ENCODE measurements at regions of chr2 and their contacts with region 1.

Region 1: DNA sequence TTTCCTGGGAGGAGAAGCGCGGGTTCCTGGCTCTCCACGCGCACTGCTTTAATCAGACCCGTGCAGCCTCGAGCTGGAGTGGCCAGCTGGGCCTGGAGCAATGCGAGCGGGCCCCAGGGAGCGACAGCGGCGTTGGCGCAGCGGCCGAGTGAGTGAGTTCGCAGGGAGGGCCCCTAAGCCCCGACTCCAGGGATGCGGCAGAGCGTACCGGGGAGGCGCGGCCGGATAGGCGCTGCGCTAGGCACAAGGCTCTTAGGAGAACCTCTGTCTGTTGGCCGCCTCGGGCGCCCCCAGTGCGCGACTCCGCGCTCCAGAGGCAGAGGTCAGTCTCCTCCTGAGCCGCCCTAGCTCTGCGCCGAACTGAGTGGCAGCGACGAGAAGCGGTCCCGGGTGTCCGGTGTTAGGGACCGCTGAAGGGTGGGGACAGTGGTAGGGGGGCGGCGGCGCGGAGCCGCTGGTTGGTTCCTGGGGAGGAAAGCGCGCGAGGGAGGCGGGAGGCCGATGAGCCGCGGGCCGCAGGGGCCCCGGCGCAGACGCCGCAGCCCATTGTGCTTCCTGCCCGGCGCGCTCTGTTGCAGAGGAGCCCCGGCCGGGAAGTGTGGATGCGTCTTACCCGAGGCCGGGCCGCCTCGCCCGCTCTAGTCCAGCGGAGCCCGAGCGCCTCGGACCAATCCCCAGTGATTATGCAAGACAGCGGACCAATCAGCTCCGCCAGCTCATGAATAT is 410 bp upstream of the DLX1 start:
- DNase-seq: peak; percentile 78
- H3K4me3 Mint-ChIP-seq: peak overlapping the region; percentile 75
- H3K27ac Mint-ChIP-seq: no peak overlapping the region
- H3K4me1 Mint-ChIP-seq: peaks cover 57% of the 10 kb centered on the region
- H3K27me3 Mint-ChIP-seq: peaks cover 93% of the 10 kb centered on the region

Region 2: GRCh38 chr2:170715062-170715931 is 1369.6 kb before region 1 on chr2 and contains the start of gene SP5:
- CTCF ChIA-PET with region 1: no interaction called
- POLR2A ChIA-PET with region 1: no interaction called
- intact Hi-C with region 1: loop called (anchors 10 kb)
- DNase-seq: peak; percentile 40
- H3K4me3 Mint-ChIP-seq: peak within 1 kb of the TSS; percentile 69
- H3K27ac Mint-ChIP-seq: no peak within 1 kb of the TSS
- H3K4me1 Mint-ChIP-seq: peaks cover 37% of the 10 kb centered on the region
- H3K27me3 Mint-ChIP-seq: peaks cover 68% of the 10 kb centered on the region
- total RNA-seq, gene SP5: not detected

Region 3: GRCh38 chr2:170822290-170823087 is 1262.4 kb before region 1 on chr2:
- CTCF ChIA-PET with region 1: no interaction called
- POLR2A ChIA-PET with region 1: no interaction called
- intact Hi-C with region 1: loop called (anchors 5 kb)
- DNase-seq: peak; percentile 62
- H3K4me3 Mint-ChIP-seq: peak overlapping the region; percentile 4
- H3K27ac Mint-ChIP-seq: no peak overlapping the region
- H3K4me1 Mint-ChIP-seq: peaks cover 42% of the 10 kb centered on the region
- H3K27me3 Mint-ChIP-seq: peaks cover 69% of the 10 kb centered on the region

Region 4: DNA sequence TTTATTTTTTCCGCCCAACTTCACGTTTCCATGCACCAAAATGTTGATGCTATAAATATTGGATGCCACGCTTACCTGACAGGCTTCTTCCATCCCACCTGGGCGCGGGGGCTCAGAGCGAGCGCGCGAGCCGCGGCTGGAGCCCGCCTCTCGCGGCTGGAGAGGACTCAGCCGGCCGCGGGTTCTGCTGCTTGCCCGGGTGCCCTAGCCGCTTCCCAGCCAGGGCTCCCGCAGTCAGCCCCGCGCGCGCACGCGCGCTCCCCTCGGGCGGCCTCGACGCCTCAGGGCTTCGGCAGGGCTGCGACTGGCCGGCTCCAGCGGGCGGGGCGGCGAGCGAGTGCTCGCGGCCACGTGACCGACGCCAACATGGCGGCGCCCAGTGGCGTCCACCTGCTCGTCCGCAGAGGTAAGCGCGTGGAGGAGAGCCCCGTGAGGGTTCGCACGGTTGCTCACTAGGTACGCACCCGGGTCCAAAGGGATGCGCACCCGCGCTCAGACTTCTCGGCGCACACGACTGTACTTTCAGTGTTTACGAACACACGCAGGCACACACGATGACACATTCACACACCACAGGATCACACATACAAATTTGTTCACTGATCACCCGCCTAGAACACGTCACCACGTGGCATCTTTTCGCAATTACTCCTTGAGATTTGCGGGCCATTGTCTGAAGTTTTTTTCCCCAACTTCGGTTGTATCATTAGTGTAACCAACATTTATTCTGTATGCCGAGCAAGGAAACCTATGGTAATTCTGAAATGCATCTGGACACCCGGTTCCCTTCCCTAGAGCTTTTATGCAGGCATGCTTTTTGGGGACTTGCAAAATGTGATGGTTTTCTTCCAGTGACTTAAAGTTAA is 85.1 kb before region 1 on chr2 and contains the start of gene METAP1D:
- CTCF ChIA-PET with region 1: no interaction called
- POLR2A ChIA-PET with region 1: no interaction called
- intact Hi-C with region 1: loop called (anchors 1 kb)
- DNase-seq: peak; percentile 91
- H3K4me3 Mint-ChIP-seq: peak within 1 kb of the TSS; percentile 93
- H3K27ac Mint-ChIP-seq: peak within 1 kb of the TSS; percentile 81
- H3K4me1 Mint-ChIP-seq: peaks cover 20% of the 10 kb centered on the region
- H3K27me3 Mint-ChIP-seq: peaks cover 6% of the 10 kb centered on the region
- total RNA-seq, gene METAP1D: 3.4 to 3.9 TPM

Region 5: DNA sequence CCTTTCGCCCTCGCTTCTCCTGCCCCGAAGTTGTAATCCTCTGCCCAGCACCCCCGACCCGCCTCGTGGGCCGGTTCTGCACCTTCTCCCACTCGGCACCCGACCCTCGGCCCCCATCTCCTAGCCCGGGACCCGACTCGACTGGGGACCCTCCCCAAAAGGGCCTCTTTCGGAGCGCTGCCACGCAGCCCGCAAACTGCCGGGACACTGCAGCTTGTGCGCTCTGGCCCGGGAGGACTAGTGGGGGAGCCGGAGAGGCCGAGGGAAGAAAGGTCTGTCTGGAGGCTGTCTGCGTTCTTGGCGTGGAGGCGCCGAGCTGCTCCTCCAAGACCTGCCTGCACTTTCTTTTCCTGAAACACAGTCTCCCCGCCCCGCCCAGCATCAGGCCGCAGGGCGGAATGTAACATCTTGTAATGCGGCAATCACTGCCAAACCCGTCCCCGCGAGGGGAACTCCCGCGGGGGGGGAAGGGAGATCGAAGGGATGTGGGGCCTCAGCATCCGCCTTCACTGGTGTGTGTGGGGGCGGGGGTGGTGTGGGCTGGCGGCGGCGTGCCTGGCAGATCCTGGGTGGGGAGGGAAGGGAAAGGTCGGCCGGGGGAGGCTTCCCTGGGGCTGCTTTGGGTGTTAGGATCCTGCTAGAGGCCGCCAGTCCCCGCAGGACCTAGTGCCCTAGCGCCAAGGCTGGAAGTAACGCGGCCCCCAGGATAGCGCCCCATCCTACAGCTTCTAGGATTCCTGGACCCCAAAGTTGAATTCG is 10.4 kb after region 1 on chr2:
- CTCF ChIA-PET with region 1: interaction called, 21 read pairs
- POLR2A ChIA-PET with region 1: no interaction called
- intact Hi-C with region 1: loop called (anchors 1 kb)
- DNase-seq: peak; percentile 79
- H3K4me3 Mint-ChIP-seq: peak overlapping the region; percentile 71
- H3K27ac Mint-ChIP-seq: no peak overlapping the region
- H3K4me1 Mint-ChIP-seq: peaks cover 43% of the 10 kb centered on the region
- H3K27me3 Mint-ChIP-seq: peaks cover 69% of the 10 kb centered on the region